Stomach (tissue), 19 donors: ENCODE measurements at regions of chr11 and their contacts with region 1.

Region 1: DNA sequence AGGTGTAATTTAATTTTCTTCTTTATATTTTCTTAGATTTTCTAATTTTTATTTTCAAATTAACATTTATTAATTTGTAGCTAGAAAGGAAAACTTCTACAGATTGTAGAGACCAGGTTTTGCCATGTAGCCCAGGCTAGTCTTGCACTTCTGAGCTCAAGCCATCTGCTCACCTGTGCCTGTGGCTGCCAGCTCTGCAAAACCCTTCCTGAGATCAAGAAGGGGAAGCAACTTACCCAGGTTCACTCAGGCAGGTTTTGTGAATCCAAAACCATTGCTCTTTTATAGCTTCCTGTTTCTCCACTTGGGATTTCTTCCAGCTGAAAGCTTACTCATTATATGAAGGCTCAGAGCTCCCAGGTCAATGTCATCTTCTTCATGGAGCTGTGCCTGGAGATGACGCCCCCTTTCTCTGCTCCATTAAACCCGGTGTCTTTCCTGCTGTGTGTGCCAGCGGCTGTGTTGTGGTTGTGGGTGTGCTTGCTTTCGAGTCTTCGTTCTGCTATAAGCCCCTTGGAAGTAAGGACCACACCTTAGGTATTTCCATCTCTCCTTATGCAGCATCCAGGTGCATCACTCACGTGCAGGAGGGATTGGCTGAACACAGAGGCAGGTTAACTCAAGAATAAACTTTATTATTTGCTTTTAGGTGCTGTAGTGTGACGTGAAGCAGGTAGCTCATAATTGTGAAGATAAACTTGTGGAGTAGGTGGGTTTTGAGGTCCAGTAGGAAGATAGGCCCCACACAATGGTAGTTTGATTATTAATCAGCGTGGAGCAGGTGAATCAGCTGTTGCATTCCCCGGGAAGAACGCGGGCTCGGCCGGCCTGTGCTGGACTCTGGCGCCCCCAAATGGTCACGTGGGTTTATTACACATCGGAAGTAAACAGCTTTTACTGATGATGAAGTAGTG is 42.2 kb upstream of the INCENP start:
- DNase-seq: peak; percentile 87 to 90
- H3K4me3 ChIP-seq: no peak overlapping the region
- H3K27ac ChIP-seq: no peak overlapping the region
- H3K4me1 ChIP-seq: peaks cover 0 to 8% (median 6%) of the 10 kb centered on the region in 4 donors
- H3K27me3 ChIP-seq: no peaks in the 10 kb centered on the region
- CTCF ChIP-seq: peak in 5 of 7 experiments; percentile 68 to 92 (median 86)
- EP300 ChIP-seq: no peak
- POLR2A ChIP-seq: no peak

Region 2: DNA sequence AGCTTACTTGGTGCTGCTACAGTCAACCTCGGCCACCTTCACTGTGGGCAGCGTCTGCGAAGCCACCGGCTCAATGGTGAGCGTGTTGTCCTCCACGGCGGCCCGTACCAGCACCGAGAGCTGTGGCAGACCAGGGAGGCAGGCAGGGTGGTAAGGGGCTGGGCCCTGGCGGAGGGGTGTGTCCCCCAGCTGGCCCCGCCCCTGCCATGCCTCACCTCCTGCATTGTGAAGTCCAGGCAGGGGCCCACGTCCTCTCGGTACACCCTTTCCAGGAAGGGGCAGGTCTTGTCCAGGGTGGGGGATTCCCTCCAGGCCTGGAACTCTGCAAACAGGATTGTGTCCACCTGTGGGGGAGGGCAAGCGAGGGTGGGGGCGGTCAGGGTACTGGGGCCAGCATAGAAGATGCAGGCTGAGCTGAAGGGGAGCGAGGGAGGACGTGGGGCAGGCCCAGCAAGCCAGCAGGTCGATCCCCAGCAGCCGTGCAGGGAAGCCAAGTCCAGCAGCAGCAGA is 177.0 kb before region 1 on chr11:
- intact Hi-C with region 1: loop called (anchors 5 kb)
- DNase-seq: peak; percentile 81 to 88
- H3K4me3 ChIP-seq: peak overlapping the region; percentile 14 to 36 (median 30)
- H3K27ac ChIP-seq: peak overlapping the region in 2 of 5 donors; percentile 13 to 56
- H3K4me1 ChIP-seq: peaks cover 0 to 21% (median 8%) of the 10 kb centered on the region in 4 donors
- H3K27me3 ChIP-seq: no peaks in the 10 kb centered on the region
- CTCF ChIP-seq: no peak
- EP300 ChIP-seq: no peak
- POLR2A ChIP-seq: no peak